PC-9 (cell line): ENCODE measurements at regions of chr17 and their contacts with region 1.

Region 1: DNA sequence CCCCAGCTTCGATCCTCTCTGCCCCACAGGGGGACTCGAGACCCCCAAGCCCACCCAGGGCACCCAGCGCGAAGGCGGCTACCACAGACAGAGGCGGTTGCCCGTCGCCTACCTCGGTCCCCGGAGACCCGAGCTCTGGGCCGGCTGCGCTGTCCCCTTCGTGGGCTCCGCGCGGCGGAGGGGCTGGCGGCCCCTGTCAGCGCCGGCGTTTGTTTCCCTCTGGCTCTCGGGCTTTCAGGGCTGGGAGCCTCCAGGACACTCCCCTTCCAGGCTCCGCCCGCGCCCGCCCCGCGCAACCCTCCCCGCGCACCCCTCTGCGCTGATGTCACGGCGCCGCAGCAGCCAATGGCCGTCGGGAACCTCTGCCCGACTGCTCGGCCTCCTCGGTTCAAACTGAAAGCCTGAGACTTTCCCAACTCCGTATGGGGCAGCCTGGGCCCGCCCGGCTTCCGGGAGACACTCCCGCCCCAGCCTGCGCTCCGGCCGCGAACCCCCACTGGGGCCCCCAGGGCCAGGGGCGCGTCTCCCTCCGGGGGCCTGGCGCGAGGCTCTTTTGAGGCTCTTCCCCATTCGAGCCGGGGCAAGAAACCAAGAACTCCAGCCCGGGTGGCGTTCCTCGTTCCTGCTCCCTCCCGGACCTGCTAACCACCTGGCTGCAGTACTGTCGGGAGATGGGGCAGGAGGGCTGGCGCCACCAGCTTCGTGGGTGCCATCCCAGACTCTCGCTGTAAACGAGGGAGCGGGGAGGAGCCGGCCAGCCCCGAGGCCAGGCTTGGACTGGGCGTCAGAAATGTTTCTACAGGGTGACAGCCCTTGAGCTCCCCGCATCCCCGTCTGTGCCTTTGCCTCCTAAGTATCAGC is at the start of gene CDC42EP4:
- DNase-seq: peak; percentile 85 to 97
- H3K4me3 ChIP-seq: peak within 1 kb of the TSS; percentile 93
- H3K27ac ChIP-seq: peak within 1 kb of the TSS; percentile 84
- H3K4me1 ChIP-seq: peaks cover 33% of the 10 kb centered on the region
- H3K27me3 ChIP-seq: no peaks in the 10 kb centered on the region
- CTCF ChIP-seq: no peak
- total RNA-seq, gene CDC42EP4: 48.4 and 52.0 TPM in 2 replicates

Region 2: DNA sequence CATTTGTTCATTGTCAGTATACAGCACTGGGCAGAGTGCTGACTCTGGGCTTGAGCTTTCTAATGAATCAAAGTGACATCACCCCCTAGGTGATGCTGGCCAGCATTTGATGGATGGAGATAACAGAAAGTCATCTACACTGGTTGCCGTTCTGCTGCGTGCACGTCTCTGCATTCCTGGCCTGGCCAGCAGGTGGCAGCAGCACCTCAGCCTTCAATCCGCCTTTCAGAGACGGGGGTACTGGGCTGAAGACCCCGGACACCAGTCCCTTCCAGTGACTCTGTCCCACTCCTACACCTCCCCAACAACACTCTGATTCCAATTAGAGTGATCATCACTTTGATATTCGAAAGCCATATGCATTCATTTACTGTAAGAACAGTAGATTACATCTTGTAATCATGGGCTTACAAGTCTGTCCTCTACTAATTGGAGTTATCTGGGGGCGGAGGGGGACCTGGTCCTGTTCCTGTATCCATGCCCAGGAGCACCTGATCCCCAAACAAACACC is 56.3 kb before region 1 on chr17:
- CTCF ChIA-PET with region 1: interaction called, 4 read pairs
- POLR2A ChIA-PET with region 1: no interaction called
- intact Hi-C with region 1: loop called (anchors 1 kb)
- DNase-seq: peak; percentile 51 to 63
- H3K4me3 ChIP-seq: no peak overlapping the region
- H3K27ac ChIP-seq: no peak overlapping the region
- H3K4me1 ChIP-seq: no peaks in the 10 kb centered on the region
- H3K27me3 ChIP-seq: no peaks in the 10 kb centered on the region
- CTCF ChIP-seq: peak; percentile 99

Region 3: GRCh38 chr17:73268582-73269328 is 43.3 kb before region 1 on chr17:
- CTCF ChIA-PET with region 1: no interaction called
- POLR2A ChIA-PET with region 1: interaction called, 4 read pairs
- intact Hi-C with region 1: loop called (anchors 1 kb)
- DNase-seq: no peak
- H3K4me3 ChIP-seq: no peak overlapping the region
- H3K27ac ChIP-seq: peak overlapping the region; percentile 53
- H3K4me1 ChIP-seq: peaks cover 22% of the 10 kb centered on the region
- H3K27me3 ChIP-seq: no peaks in the 10 kb centered on the region
- CTCF ChIP-seq: no peak

Region 4: GRCh38 chr17:73291260-73291801 is 20.7 kb before region 1 on chr17:
- CTCF ChIA-PET with region 1: interaction called, 4 read pairs
- POLR2A ChIA-PET with region 1: interaction called, 17 read pairs
- intact Hi-C with region 1: loop called (anchors 1 kb)
- DNase-seq: peak; percentile 92 to 94
- H3K4me3 ChIP-seq: peak overlapping the region; percentile 46; the same call in 1 of the 2 replicates
- H3K27ac ChIP-seq: peak overlapping the region; percentile 99
- H3K4me1 ChIP-seq: peaks cover 91% of the 10 kb centered on the region
- H3K27me3 ChIP-seq: no peaks in the 10 kb centered on the region
- CTCF ChIP-seq: no peak

Region 5: GRCh38 chr17:73340093-73340596 is 28.1 kb after region 1 on chr17:
- CTCF ChIA-PET with region 1: interaction called, 3 read pairs
- POLR2A ChIA-PET with region 1: no interaction called
- intact Hi-C with region 1: loop called (anchors 2 kb)
- DNase-seq: peak; percentile 73 to 97
- H3K4me3 ChIP-seq: no peak overlapping the region
- H3K27ac ChIP-seq: peak overlapping the region; percentile 89
- H3K4me1 ChIP-seq: peaks cover 56% of the 10 kb centered on the region
- H3K27me3 ChIP-seq: no peaks in the 10 kb centered on the region
- CTCF ChIP-seq: peak; percentile 71

Region 6: GRCh38 chr17:73359987-73360410 is 48.0 kb after region 1 on chr17:
- CTCF ChIA-PET with region 1: interaction called, 3 read pairs
- POLR2A ChIA-PET with region 1: interaction called, 6 read pairs
- intact Hi-C with region 1: loop called (anchors 1 kb)
- DNase-seq: peak; percentile 76 to 87
- H3K4me3 ChIP-seq: no peak overlapping the region
- H3K27ac ChIP-seq: no peak overlapping the region
- H3K4me1 ChIP-seq: peaks cover 11% of the 10 kb centered on the region
- H3K27me3 ChIP-seq: no peaks in the 10 kb centered on the region
- CTCF ChIP-seq: no peak; the same call in 1 of the 2 replicates

Region 7: GRCh38 chr17:73371285-73371684 is 59.3 kb after region 1 on chr17:
- CTCF ChIA-PET with region 1: interaction called, 3 read pairs
- POLR2A ChIA-PET with region 1: interaction called, 4 read pairs
- intact Hi-C with region 1: loop called (anchors 1 kb)
- DNase-seq: no peak
- H3K4me3 ChIP-seq: no peak overlapping the region
- H3K27ac ChIP-seq: no peak overlapping the region
- H3K4me1 ChIP-seq: no peaks in the 10 kb centered on the region
- H3K27me3 ChIP-seq: peaks cover 32% of the 10 kb centered on the region
- CTCF ChIP-seq: no peak

Region 8: DNA sequence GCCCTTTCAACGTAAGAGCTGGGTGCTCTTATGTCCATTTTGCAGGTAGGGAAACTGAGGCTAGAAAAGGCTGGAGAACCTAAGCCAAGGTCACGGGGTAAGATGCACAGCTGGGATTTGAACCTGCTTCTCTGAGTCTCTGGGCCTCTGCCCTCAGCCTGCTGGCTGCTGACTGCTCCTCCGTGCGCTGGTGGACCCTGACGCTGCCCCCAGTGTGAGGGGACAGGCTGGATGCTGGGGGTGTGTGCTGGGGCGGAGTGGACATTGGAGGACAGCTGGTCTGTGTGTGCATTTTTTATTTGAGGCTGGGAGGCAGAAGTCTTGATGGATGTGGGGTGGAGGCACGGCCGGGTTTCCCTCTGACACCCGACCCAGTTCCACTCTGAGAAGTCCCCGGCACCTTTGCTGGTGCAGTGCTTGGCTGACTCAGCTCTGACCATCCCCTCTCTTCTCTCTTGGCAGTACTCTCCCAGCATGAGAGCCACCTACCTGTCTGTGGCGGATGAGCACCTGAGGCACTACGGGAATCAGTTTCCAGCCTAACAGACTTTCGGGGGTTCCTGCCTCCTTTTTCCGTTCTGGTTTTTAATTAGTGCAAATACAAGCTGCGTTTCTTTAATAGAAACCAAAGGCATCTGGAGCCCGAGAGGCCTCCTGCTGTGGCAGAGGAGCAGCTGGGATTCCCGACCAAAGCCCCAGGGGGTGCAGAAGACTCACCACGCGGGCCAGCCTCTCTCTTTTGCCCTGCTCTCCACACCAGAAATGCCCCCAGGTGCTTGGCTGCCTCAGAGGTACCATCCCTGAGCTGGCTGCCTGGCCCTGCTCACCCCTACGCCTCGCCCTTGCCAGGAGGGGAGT is 947.9 kb after region 1 on chr17:
- CTCF ChIA-PET with region 1: no interaction called
- POLR2A ChIA-PET with region 1: no interaction called
- intact Hi-C with region 1: no loop called
- DNase-seq: no peak
- H3K4me3 ChIP-seq: no peak overlapping the region
- H3K27ac ChIP-seq: no peak overlapping the region
- H3K4me1 ChIP-seq: no peaks in the 10 kb centered on the region
- H3K27me3 ChIP-seq: peaks cover 85% of the 10 kb centered on the region
- CTCF ChIP-seq: peak; percentile 37; the same call in 1 of the 2 replicates